ENCODE measurements at regions of chr1 and their contacts with region 1.

Region 1: GRCh38 chr1:54052934-54053744 is at the starts of genes TCEANC2 and TMEM59:
- DNase-seq: peak; percentile 99
- H3K4me3 ChIP-seq: peak within 1 kb of the TSS; percentile 87 to 93 (median 90)
- H3K27ac ChIP-seq: peak within 1 kb of the TSS; percentile 96 to 98 (median 97)
- H3K4me1 ChIP-seq: peaks cover 0 to 53% (median 45%) of the 10 kb centered on the region in 4 donors
- H3K27me3 ChIP-seq: no peaks in the 10 kb centered on the region
- CTCF ChIP-seq: peak in 1 of 4 experiments; percentile 18
- EP300 ChIP-seq: no peak
- POLR2A ChIP-seq: peak; percentile 55 to 63
- total RNA-seq, gene TCEANC2: 6.1 to 6.9 (median 6.6) TPM
- total RNA-seq, gene TMEM59: 114 to 299 (median 237) TPM

Region 2: GRCh38 chr1:53837924-53838652 is 215.1 kb before region 1 on chr1 and contains the start of gene NDC1:
- intact Hi-C with region 1: loop called (anchors 2 kb)
- DNase-seq: peak; percentile 93
- H3K4me3 ChIP-seq: peak within 1 kb of the TSS; percentile 80 to 93 (median 88)
- H3K27ac ChIP-seq: peak within 1 kb of the TSS; percentile 91 to 96 (median 93)
- H3K4me1 ChIP-seq: peaks cover 0 to 18% (median 11%) of the 10 kb centered on the region in 4 donors
- H3K27me3 ChIP-seq: no peaks in the 10 kb centered on the region
- CTCF ChIP-seq: no peak
- EP300 ChIP-seq: peak in 1 of 4 donors; percentile 19
- POLR2A ChIP-seq: no peak
- total RNA-seq, gene NDC1: 7.6 to 11.4 (median 10.2) TPM

Region 3: DNA sequence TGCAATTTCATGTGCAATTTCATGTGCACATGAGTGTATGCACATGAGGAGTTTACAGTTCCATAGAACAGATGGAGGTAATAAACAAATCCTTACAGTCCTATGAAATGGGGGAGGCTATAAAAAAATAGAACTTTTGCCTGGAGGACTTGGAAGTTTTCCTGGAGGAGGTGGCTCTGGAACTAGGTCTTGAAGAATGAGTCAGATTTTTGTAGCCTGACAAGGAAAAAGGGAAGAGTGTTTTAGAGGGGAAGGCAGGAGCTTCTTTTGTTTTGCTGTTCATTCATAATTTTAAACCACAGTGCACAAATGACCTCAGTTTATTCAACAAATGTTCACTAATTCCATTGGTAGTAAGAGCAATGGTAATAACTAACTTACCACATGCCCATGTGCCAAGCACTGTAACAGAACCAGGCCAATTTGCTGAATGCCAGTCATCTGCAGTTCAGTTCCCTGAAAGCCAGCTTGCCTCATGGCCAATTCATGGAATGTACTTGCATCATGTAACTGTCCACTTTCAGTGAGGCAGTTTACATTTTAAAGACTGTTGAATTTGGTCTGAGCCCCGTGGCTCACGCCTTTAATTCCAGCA is 156.4 kb before region 1 on chr1:
- intact Hi-C with region 1: loop called (anchors 5 kb)
- DNase-seq: no peak
- H3K4me3 ChIP-seq: no peak overlapping the region
- H3K27ac ChIP-seq: peak overlapping the region; percentile 56 to 65 (median 60)
- H3K4me1 ChIP-seq: peaks cover 0 to 46% (median 35%) of the 10 kb centered on the region in 4 donors
- H3K27me3 ChIP-seq: no peaks in the 10 kb centered on the region
- CTCF ChIP-seq: no peak
- EP300 ChIP-seq: no peak
- POLR2A ChIP-seq: no peak

Region 4: GRCh38 chr1:53951697-53952096 is 101.4 kb before region 1 on chr1:
- intact Hi-C with region 1: loop called (anchors 2 kb)
- DNase-seq: no peak
- H3K4me3 ChIP-seq: no peak overlapping the region
- H3K27ac ChIP-seq: peak overlapping the region in 1 of 4 donors; percentile 4
- H3K4me1 ChIP-seq: peaks cover 0 to 49% (median 35%) of the 10 kb centered on the region in 4 donors
- H3K27me3 ChIP-seq: no peaks in the 10 kb centered on the region
- CTCF ChIP-seq: no peak
- EP300 ChIP-seq: no peak
- POLR2A ChIP-seq: no peak